ENCODE measurements at regions of chr11 and their contacts with region 1.

Region 1: GRCh38 chr11:33869481-33870422 is 22.1 kb downstream of the LMO2 start:
- DNase-seq: peak; percentile 95

Region 2: DNA sequence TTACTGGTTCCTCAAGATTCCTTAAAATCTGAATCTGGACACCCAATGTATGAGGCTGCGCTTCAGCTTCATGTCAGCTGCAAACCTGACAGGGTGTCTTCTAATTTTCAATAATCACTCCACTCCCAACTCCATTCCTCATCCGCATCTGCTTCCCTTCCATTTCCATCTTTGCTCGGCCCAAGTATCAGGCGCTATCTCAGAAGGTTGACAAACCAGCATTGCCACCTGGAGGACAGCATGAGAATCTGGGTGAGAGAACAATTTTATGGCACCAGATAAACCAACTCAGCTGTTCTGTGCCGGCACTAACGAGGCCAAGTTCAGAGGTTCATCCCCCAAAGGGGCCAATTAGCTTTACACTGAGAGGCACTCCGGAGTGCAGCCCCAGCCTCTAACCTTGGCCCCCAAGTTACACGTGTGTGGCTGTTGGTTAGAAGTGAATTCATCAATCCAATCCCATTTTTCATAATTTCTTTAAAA is 101.3 kb after region 1 on chr11:
- in situ Hi-C with region 1: loop called (anchors 10 kb)
- DNase-seq: peak; percentile 79